ENCODE measurements at regions of chr11 and their contacts with region 1.

Region 1: DNA sequence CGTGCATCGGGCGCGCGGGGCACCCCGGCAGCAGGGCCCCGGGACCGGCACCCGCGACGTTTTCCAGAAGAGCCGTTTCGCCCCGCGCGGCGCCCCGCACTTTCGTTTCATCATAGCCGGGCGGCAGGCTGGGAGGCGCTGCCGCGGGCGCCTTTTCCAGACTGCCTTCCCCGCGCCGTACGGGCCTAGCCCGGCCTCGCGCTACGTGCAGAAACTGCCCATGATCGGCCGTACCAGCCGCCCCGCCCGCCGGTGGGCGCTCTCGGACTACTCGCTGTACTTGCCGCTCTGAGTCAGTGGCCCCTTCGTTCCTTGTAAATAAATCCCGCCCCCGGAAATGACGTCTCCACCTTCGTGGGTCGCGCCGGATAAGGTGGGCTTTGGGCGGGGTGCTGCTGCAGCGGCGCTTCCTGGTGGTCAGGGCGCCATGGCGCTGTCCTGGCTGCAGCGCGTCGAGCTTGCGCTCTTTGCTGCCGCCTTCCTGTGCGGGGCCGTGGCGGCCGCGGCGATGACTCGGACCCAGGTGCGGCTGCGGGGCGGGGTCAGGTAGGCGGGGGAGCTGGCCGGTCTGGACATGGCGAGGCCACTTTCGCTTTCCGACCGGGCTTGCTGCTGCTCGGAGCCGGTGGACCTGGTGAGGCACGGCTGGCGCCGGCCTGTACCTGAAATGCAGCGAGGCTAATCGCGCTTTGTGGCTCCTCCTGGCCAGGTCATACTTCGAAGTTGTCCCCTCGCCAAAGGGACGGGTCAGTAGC is at the start of gene TMEM179B:
- DNase-seq: peak; percentile 99
- H3K4me3 Mint-ChIP-seq: peak within 1 kb of the TSS; percentile 92
- H3K27ac Mint-ChIP-seq: peak within 1 kb of the TSS; percentile 93
- H3K4me1 Mint-ChIP-seq: peaks cover 47% of the 10 kb centered on the region
- H3K27me3 Mint-ChIP-seq: no peaks in the 10 kb centered on the region
- total RNA-seq, gene TMEM179B: 13.9 to 15.2 TPM

Region 2: DNA sequence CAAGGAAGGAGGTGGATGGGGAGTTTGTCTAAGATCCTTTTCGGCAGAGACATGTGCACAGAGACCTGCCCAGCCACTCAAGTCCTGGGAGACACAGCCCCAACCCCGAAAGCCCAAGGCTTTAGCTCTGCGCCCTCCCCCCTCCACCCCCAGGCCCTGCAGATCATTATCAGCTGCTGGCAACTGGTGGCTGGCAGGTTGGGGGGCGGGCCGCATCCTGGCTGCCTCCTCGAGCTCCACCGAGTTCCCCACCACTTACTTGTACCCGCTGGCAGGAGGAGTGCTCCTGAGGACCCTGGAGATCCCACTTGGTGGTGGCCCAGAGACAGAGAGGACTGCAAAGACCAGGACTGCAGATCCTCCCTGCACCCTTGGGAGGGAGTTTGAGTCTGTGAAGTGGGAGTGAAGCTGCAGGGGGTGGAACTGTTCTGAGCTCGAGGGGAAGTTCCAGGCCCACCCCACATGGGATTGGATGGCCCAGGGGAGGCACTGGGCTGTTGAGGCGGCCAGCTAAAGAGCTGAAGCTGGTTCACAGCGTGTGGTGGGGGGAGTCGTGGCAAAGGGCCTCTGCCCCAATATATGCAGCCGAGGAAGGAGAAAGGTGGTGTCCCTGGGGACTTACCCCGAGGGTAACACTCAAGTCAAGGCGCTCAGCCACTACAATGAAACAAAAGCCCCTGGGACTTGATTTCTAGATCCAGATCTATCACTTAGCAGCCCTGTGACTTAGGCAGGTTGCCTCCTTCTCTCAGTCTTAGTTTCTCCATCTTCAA is 1965.2 kb before region 1 on chr11:
- CTCF ChIA-PET with region 1: no interaction called
- intact Hi-C with region 1: no loop called
- DNase-seq: no peak
- H3K4me3 Mint-ChIP-seq: no peak overlapping the region
- H3K27ac Mint-ChIP-seq: no peak overlapping the region
- H3K4me1 Mint-ChIP-seq: no peaks in the 10 kb centered on the region
- H3K27me3 Mint-ChIP-seq: no peaks in the 10 kb centered on the region

Region 3: DNA sequence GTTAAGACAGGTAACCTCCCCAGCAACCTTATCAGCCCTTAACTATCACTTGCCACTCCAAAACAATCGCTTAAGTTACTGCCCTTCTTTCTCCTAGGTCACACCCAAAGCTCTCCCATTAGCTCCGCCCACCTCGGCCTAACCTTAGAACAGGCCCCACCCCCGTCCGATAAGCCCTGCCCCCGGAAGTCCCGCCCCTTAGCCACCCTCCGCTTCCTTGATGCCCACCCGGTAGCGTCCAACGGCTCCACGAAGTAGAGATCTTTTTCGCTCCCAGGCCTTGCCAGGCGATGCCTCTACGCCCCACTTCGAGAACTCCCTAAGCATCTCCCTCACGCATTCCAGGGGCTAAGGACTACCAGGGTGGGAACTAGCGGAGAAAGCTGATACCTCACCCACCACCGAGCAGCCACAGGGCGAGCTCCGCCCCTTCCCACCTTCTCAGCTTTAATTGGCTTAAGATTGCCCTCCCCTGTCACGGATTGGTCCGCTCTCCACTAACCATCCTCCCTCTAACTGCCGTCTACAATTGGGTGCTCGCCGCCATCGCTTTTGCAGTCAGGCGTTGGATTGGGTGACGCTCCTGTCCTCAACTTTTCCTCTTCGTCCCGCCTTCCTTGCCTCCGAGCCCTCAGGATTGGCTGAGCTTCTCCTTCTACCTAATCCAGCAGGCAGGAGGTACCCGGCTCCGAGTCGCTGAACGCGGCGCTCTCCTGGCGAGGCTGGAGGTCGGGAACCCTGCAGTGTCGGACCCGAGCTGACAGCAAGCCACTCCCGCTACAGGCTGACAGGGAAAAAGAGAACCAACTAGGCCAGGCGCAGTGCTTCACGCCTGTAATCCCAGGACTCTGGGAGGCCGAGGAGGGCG is 33.2 kb before region 1 on chr11 and contains the start of gene ZBTB3:
- CTCF ChIA-PET with region 1: interaction called, 16 read pairs
- intact Hi-C with region 1: loop called (anchors 1 kb)
- DNase-seq: peak; percentile 99
- H3K4me3 Mint-ChIP-seq: peak within 1 kb of the TSS; percentile 98
- H3K27ac Mint-ChIP-seq: peak within 1 kb of the TSS; percentile 96
- H3K4me1 Mint-ChIP-seq: peaks cover 34% of the 10 kb centered on the region
- H3K27me3 Mint-ChIP-seq: no peaks in the 10 kb centered on the region
- total RNA-seq, gene ZBTB3: 12.1 to 13.5 TPM

Region 4: DNA sequence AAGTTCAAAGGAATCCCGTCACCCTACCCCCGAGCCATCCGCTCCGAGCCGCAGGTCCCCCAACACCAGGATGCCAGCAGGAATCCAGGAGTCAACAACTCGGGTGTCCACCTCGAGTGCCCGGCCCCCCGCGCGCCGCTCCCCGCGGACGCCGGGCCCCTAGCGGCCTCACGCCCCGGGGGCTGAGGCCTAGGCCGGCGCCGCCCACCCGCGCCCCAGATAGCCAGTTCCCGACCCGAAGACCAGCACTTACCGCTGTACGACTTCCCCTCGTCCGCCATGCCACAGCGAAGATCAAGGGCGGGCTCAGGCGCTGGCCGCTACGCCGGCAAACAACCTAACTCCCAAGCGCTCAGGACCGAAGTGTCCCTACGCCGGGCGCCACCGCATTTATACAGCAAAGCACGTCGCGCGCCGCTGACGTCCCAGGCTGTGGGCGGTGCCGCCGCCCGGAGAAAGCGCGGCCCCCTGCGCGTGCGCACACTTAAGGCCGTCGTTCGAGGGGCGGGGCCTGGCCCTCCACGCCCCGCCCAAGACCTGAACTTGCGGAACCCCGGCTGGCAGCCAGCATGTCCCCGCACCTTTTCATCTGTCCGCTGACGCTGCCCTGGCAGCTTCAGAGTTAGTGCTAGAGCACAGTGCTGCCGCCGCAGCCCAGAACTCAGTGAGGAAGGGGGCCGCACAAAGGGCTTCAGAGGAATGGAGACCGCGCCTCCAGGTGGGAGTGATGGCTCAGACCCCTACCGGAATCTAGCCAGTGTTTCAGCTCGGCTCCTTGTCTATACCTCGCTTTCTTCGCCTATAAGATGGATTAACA is 18.1 kb after region 1 on chr11 and contains the start of gene NXF1:
- CTCF ChIA-PET with region 1: interaction called, 12 read pairs
- intact Hi-C with region 1: loop called (anchors 1 kb)
- DNase-seq: peak; percentile 93
- H3K4me3 Mint-ChIP-seq: peak within 1 kb of the TSS; percentile 95
- H3K27ac Mint-ChIP-seq: peak within 1 kb of the TSS; percentile 94
- H3K4me1 Mint-ChIP-seq: peaks cover 28% of the 10 kb centered on the region
- H3K27me3 Mint-ChIP-seq: no peaks in the 10 kb centered on the region
- total RNA-seq, gene NXF1: 44.6 to 46.0 TPM

Region 5: GRCh38 chr11:62855571-62856332 is 68.6 kb after region 1 on chr11:
- CTCF ChIA-PET with region 1: interaction called, 28 read pairs
- intact Hi-C with region 1: loop called (anchors 1 kb)
- DNase-seq: peak; percentile 98
- H3K4me3 Mint-ChIP-seq: peak overlapping the region; percentile 99
- H3K27ac Mint-ChIP-seq: peak overlapping the region; percentile 96
- H3K4me1 Mint-ChIP-seq: peaks cover 53% of the 10 kb centered on the region
- H3K27me3 Mint-ChIP-seq: no peaks in the 10 kb centered on the region

Region 6: GRCh38 chr11:63023841-63024648 is 236.9 kb after region 1 on chr11:
- CTCF ChIA-PET with region 1: interaction called, 5 read pairs
- intact Hi-C with region 1: loop called (anchors 5 kb)
- DNase-seq: peak; percentile 93
- H3K4me3 Mint-ChIP-seq: no peak overlapping the region
- H3K27ac Mint-ChIP-seq: no peak overlapping the region
- H3K4me1 Mint-ChIP-seq: peaks cover 4% of the 10 kb centered on the region
- H3K27me3 Mint-ChIP-seq: peaks cover 2% of the 10 kb centered on the region

Region 7: GRCh38 chr11:63738720-63739360 is 951.7 kb after region 1 on chr11:
- CTCF ChIA-PET with region 1: no interaction called
- intact Hi-C with region 1: no loop called
- DNase-seq: peak; percentile 86
- H3K4me3 Mint-ChIP-seq: no peak overlapping the region
- H3K27ac Mint-ChIP-seq: no peak overlapping the region
- H3K4me1 Mint-ChIP-seq: peaks cover 2% of the 10 kb centered on the region
- H3K27me3 Mint-ChIP-seq: no peaks in the 10 kb centered on the region

Measured in activated naive CD4-positive, alpha-beta T cell treated with anti-CD3 and anti-CD28 coated beads for 36 hours (primary cell).